A549 (cell line): ENCODE measurements at regions of chr10 and their contacts with region 1.

Region 1: GRCh38 chr10:124741281-124741921 is 2.8 kb downstream of the FAM53B start:
- DNase-seq: peak; percentile 71 to 87
- ATAC-seq: peak; percentile 47 to 79; a peak in 5 of 6 replicates
- H3K4me3 ChIP-seq: no peak overlapping the region
- H3K27ac ChIP-seq: no peak overlapping the region
- H3K4me1 ChIP-seq: peaks cover 44% of the 10 kb centered on the region
- CTCF ChIP-seq: peak; percentile 78
- EP300 ChIP-seq: no peak
- POLR2A ChIP-seq: no peak
- RAD21 ChIP-seq: peak; percentile 66 to 71

Region 2: DNA sequence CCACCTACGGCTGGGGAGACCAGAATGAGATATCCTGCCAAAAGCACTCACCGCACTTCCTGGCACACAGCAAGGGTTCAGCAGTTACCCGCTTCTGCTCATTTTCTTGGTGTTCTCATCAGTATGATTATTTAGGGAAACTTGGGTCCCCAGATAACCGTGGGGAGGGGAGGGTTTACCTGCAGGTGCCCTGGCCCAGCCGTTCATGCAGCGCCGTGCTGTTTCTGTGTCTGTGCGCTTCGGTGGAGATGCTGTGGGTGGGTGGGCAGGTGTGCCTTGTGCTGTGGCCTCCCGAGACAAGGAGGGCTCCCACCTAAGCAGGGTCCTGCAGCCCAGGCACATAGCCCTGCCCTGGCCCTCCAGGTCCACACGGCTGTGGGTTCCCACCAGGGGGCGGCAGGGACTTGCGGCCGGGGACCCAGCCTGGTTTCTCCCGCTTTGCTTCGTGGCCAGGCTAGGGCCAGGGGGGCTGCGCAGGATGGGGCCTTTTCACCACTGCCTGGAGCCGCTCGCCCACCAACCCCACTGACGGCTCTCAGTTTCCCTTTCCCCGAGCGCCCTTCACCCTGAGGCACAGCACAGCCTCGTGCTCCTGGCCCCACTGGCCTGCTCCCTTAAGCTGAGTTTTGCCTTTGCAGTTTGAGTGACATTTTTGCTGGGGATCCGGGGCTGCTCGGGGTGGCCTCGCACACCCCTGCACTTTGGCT is 201.3 kb before region 1 on chr10:
- CTCF ChIA-PET with region 1: interaction called, 96 read pairs
- POLR2A ChIA-PET with region 1: no interaction called
- DNase-seq: peak; percentile 28 to 62
- ATAC-seq: peak; percentile 76 to 89
- H3K4me3 ChIP-seq: no peak overlapping the region
- H3K27ac ChIP-seq: no peak overlapping the region
- H3K4me1 ChIP-seq: no peaks in the 10 kb centered on the region
- CTCF ChIP-seq: peak; percentile 49
- EP300 ChIP-seq: no peak
- POLR2A ChIP-seq: no peak
- RAD21 ChIP-seq: peak; percentile 66 to 75

Region 3: GRCh38 chr10:124717911-124718741 is 23.3 kb before region 1 on chr10:
- CTCF ChIA-PET with region 1: interaction called, 12 read pairs
- POLR2A ChIA-PET with region 1: no interaction called
- DNase-seq: no peak
- ATAC-seq: no peak
- H3K4me3 ChIP-seq: no peak overlapping the region
- H3K27ac ChIP-seq: no peak overlapping the region
- H3K4me1 ChIP-seq: no peaks in the 10 kb centered on the region
- CTCF ChIP-seq: no peak
- EP300 ChIP-seq: no peak
- POLR2A ChIP-seq: no peak
- RAD21 ChIP-seq: no peak

Region 4: DNA sequence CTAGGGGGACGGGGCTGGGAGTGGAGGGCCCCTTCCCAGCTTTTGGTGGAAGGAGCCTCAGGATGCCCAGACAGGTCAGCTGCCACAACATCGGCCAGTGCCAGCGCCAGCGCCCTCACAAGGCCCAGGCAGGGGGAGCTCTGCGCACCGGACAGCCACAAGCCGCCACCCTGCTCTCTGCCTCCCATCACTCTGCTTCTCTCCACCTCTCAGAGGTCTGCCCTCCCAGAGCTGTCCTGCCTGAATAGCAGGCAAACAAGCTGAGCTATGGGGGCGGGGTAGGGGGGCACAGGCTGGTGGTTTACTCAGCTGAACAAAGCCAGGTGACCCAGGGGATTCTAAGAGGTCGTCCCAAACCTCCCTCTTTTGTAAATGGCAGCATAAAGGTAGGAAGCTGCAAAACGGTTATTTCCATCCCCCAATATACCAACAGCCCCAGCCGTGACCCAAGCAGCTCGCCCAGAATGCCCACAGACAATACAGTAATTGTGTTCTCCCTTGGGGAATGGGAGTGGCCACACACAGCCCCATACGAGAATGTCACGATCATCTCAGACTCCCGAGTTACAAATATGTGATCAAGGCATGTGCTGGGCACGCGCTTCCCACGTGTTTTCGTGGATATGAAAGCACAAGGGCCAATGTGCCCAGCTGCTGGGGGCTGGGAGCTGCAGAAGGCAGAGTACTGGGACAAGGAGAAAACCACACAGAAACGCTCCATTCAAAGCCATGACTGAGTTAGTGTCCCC is 16.9 kb before region 1 on chr10:
- CTCF ChIA-PET with region 1: interaction called, 35 read pairs
- POLR2A ChIA-PET with region 1: no interaction called
- DNase-seq: no peak
- ATAC-seq: no peak
- H3K4me3 ChIP-seq: no peak overlapping the region
- H3K27ac ChIP-seq: no peak overlapping the region
- H3K4me1 ChIP-seq: no peaks in the 10 kb centered on the region
- CTCF ChIP-seq: no peak
- EP300 ChIP-seq: no peak
- POLR2A ChIP-seq: no peak
- RAD21 ChIP-seq: no peak

Region 5: DNA sequence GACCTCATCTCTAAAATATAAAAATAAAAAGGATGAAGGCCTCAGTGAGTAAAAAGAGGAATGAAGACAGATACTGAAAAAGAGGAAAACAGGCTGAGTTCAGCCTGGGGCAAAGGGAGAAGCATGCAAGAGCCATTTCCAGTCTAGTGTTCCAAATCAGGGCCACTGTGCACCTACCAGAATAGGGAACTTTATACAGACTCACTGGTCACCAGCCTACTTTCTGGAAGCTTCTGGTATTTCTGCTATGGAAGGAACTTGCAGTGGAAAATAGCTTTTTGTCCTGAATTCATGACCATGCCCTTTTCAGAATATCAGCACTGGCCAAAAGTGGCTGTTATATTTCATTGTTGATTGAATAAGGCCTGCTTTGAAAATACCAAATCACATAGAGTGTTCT is 89.0 kb after region 1 on chr10:
- CTCF ChIA-PET with region 1: no interaction called
- POLR2A ChIA-PET with region 1: no interaction called
- DNase-seq: no peak
- ATAC-seq: no peak
- H3K4me3 ChIP-seq: no peak overlapping the region
- H3K27ac ChIP-seq: no peak overlapping the region
- H3K4me1 ChIP-seq: no peaks in the 10 kb centered on the region
- CTCF ChIP-seq: no peak
- EP300 ChIP-seq: no peak
- POLR2A ChIP-seq: no peak
- RAD21 ChIP-seq: no peak

Region 6: GRCh38 chr10:124849111-124849773 is 107.8 kb after region 1 on chr10:
- CTCF ChIA-PET with region 1: no interaction called
- POLR2A ChIA-PET with region 1: no interaction called
- DNase-seq: no peak
- ATAC-seq: peak; percentile 24 to 27; a peak in 4 of 6 replicates
- H3K4me3 ChIP-seq: no peak overlapping the region
- H3K27ac ChIP-seq: no peak overlapping the region
- H3K4me1 ChIP-seq: no peaks in the 10 kb centered on the region
- CTCF ChIP-seq: no peak
- EP300 ChIP-seq: no peak
- POLR2A ChIP-seq: no peak
- RAD21 ChIP-seq: no peak